ENCODE measurements at regions of chr1 and their contacts with region 1.

Region 1: GRCh38 chr1:15617175-15617880 is at the start of gene DDI2:
- DNase-seq: peak; percentile 88 to 98
- H3K4me3 ChIP-seq: peak within 1 kb of the TSS; percentile 91
- H3K27ac ChIP-seq: peak within 1 kb of the TSS; percentile 85
- H3K4me1 ChIP-seq: peaks cover 46% of the 10 kb centered on the region
- H3K27me3 ChIP-seq: no peaks in the 10 kb centered on the region
- CTCF ChIP-seq: no peak
- total RNA-seq, gene DDI2: 36.1 and 38.0 TPM in 2 replicates

Region 2: GRCh38 chr1:15513919-15514318 is 103.4 kb before region 1 on chr1:
- CTCF ChIA-PET with region 1: no interaction called
- POLR2A ChIA-PET with region 1: interaction called, 13 read pairs
- intact Hi-C with region 1: no loop called
- DNase-seq: no peak
- H3K4me3 ChIP-seq: no peak overlapping the region
- H3K27ac ChIP-seq: no peak overlapping the region
- H3K4me1 ChIP-seq: no peaks in the 10 kb centered on the region
- H3K27me3 ChIP-seq: no peaks in the 10 kb centered on the region
- CTCF ChIP-seq: no peak

Region 3: GRCh38 chr1:15526490-15527339 is 90.6 kb before region 1 on chr1 and contains the start of gene DNAJC16:
- CTCF ChIA-PET with region 1: no interaction called
- POLR2A ChIA-PET with region 1: interaction called, 35 read pairs
- intact Hi-C with region 1: loop called (anchors 1 kb)
- DNase-seq: peak; percentile 98 to 99
- H3K4me3 ChIP-seq: peak within 1 kb of the TSS; percentile 81
- H3K27ac ChIP-seq: peak within 1 kb of the TSS; percentile 69
- H3K4me1 ChIP-seq: peaks cover 17% of the 10 kb centered on the region
- H3K27me3 ChIP-seq: no peaks in the 10 kb centered on the region
- CTCF ChIP-seq: no peak
- total RNA-seq, gene DNAJC16: 12.0 and 18.8 TPM in 2 replicates

Region 4: GRCh38 chr1:15559294-15559761 is 58.0 kb before region 1 on chr1:
- CTCF ChIA-PET with region 1: no interaction called
- POLR2A ChIA-PET with region 1: no interaction called
- intact Hi-C with region 1: loop called (anchors 1 kb)
- DNase-seq: peak; percentile 44 to 89
- H3K4me3 ChIP-seq: peak overlapping the region; percentile 41; the same call in 1 of the 2 replicates
- H3K27ac ChIP-seq: peak overlapping the region; percentile 99
- H3K4me1 ChIP-seq: peaks cover 36% of the 10 kb centered on the region
- H3K27me3 ChIP-seq: no peaks in the 10 kb centered on the region
- CTCF ChIP-seq: no peak

Region 5: GRCh38 chr1:15633756-15634420 is 16.6 kb after region 1 on chr1:
- CTCF ChIA-PET with region 1: no interaction called
- POLR2A ChIA-PET with region 1: no interaction called
- intact Hi-C with region 1: no loop called
- DNase-seq: no peak
- H3K4me3 ChIP-seq: no peak overlapping the region
- H3K27ac ChIP-seq: no peak overlapping the region
- H3K4me1 ChIP-seq: no peaks in the 10 kb centered on the region
- H3K27me3 ChIP-seq: no peaks in the 10 kb centered on the region
- CTCF ChIP-seq: no peak

Region 6: GRCh38 chr1:15667362-15667761 is 50.0 kb after region 1 on chr1:
- CTCF ChIA-PET with region 1: no interaction called
- POLR2A ChIA-PET with region 1: no interaction called
- intact Hi-C with region 1: no loop called
- DNase-seq: no peak
- H3K4me3 ChIP-seq: no peak overlapping the region
- H3K27ac ChIP-seq: no peak overlapping the region
- H3K4me1 ChIP-seq: no peaks in the 10 kb centered on the region
- H3K27me3 ChIP-seq: no peaks in the 10 kb centered on the region
- CTCF ChIP-seq: no peak

Region 7: GRCh38 chr1:15684468-15685291 is 67.4 kb after region 1 on chr1:
- CTCF ChIA-PET with region 1: no interaction called
- POLR2A ChIA-PET with region 1: interaction called, 3 read pairs
- intact Hi-C with region 1: loop called (anchors 2 kb)
- DNase-seq: no peak
- H3K4me3 ChIP-seq: peak overlapping the region; percentile 61
- H3K27ac ChIP-seq: no peak overlapping the region
- H3K4me1 ChIP-seq: peaks cover 49% of the 10 kb centered on the region
- H3K27me3 ChIP-seq: no peaks in the 10 kb centered on the region
- CTCF ChIP-seq: no peak

Region 8: GRCh38 chr1:15777909-15778707 is 160.8 kb after region 1 on chr1:
- CTCF ChIA-PET with region 1: no interaction called
- POLR2A ChIA-PET with region 1: interaction called, 15 read pairs
- intact Hi-C with region 1: no loop called
- DNase-seq: no peak
- H3K4me3 ChIP-seq: no peak overlapping the region
- H3K27ac ChIP-seq: no peak overlapping the region
- H3K4me1 ChIP-seq: peaks cover 28% of the 10 kb centered on the region
- H3K27me3 ChIP-seq: no peaks in the 10 kb centered on the region
- CTCF ChIP-seq: no peak

Region 9: DNA sequence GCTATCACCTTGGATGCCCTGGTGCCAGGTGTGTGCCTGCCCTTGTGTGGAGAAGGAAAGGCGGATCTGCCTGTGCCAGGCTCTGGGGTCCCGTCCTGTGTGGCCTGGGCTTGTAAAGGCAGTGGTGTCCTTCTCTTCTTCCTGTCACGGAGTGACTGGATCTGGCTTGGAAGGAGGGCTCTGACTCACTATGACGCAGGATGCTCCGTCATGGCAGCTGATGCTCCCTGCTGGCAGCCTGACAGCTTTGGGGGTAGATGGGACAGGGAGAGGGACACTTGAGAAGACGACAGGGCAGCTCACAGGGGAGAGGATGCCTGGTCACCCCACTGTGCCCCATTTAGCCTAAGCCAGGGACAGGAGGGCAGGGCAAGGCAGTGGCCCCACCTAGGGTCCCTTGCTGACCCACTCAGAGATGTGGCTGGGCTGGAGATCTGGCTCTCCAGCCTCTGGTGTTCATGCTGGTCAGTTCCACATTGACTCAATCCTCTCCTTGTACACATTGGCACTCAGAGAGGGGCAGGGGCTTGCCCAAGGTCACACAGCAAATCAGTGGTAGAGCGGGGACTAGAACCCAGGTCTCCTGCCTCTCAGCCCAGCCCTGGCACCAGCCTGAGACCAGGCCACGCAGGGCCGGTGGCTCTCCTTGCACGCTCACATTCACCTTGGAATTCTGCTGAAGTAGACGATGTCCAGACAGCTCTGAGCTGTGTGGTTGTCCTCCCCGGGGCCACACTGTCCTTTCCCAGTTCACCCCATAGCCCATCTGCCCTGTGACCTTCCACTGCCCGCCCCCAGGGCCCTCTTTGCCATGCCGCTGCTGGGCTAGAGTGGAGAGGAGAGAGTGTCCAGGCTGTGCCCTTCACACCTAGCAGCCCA is 458.9 kb after region 1 on chr1:
- CTCF ChIA-PET with region 1: no interaction called
- POLR2A ChIA-PET with region 1: no interaction called
- intact Hi-C with region 1: no loop called
- DNase-seq: peak; percentile 65 to 68
- H3K4me3 ChIP-seq: no peak overlapping the region
- H3K27ac ChIP-seq: peak overlapping the region; percentile 48
- H3K4me1 ChIP-seq: peaks cover 48% of the 10 kb centered on the region
- H3K27me3 ChIP-seq: no peaks in the 10 kb centered on the region
- CTCF ChIP-seq: no peak

Region 10: GRCh38 chr1:16146279-16147155 is 529.2 kb after region 1 on chr1:
- CTCF ChIA-PET with region 1: no interaction called
- POLR2A ChIA-PET with region 1: no interaction called
- intact Hi-C with region 1: no loop called
- DNase-seq: peak; percentile 75 to 90
- H3K4me3 ChIP-seq: peak overlapping the region; percentile 86
- H3K27ac ChIP-seq: peak overlapping the region; percentile 92
- H3K4me1 ChIP-seq: peaks cover 94% of the 10 kb centered on the region
- H3K27me3 ChIP-seq: no peaks in the 10 kb centered on the region
- CTCF ChIP-seq: no peak

Region 11: GRCh38 chr1:16206547-16207317 is 589.4 kb after region 1 on chr1:
- CTCF ChIA-PET with region 1: no interaction called
- POLR2A ChIA-PET with region 1: interaction called, 11 read pairs
- intact Hi-C with region 1: no loop called
- DNase-seq: peak; percentile 89 to 97
- H3K4me3 ChIP-seq: peak overlapping the region; percentile 67
- H3K27ac ChIP-seq: peak overlapping the region; percentile 83
- H3K4me1 ChIP-seq: peaks cover 16% of the 10 kb centered on the region
- H3K27me3 ChIP-seq: no peaks in the 10 kb centered on the region
- CTCF ChIP-seq: no peak

Measured in PC-9 (cell line).